Body of pancreas (tissue), 4 donors: ENCODE measurements at regions of chr3 and their contacts with region 1.

Region 1: GRCh38 chr3:5187156-5187919 is at the start of gene EDEM1:
- DNase-seq: peak; percentile 95 to 96 (median 95)
- ATAC-seq: peak; percentile 94
- H3K4me3 ChIP-seq: peak within 1 kb of the TSS; percentile 73 to 76
- H3K27ac ChIP-seq: peak within 1 kb of the TSS; percentile 85 to 99 (median 95)
- H3K4me1 ChIP-seq: peaks cover 36% of the 10 kb centered on the region
- H3K27me3 ChIP-seq: no peaks in the 10 kb centered on the region
- CTCF ChIP-seq: no peak
- POLR2A ChIP-seq: peak; percentile 82 to 87 (median 86)
- total RNA-seq, gene EDEM1: 23.9 to 46.1 TPM

Region 2: DNA sequence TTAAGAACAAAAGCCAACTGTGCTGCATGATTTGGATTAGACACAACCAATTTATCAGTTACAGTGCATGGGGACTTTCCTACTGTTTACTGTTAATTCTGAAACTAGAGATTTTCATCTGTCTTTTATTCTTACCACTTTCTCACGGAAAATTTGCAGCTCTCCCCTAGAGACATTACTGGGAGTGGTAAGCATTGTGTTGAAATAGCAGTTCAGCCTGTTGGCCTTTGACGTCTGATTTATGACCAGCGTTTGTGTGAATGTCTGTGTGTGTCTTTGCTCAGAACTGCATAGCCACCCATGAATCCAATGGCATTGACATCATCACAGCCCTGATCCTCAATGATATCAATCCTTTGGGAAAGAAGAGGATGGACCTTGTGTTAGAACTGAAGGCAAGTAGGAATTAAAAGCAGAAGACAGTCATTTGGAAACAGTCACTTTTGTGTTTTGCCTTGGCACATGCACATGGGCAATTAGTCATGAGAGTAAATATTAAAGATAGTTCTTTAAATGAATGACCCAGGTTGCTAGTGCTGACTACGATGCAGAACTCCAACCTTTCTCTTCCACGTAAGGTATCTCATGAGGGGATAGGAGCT is 410.3 kb before region 1 on chr3:
- intact Hi-C with region 1: no loop called
- DNase-seq: peak in 2 of 4 donors; percentile 27 to 60
- ATAC-seq: peak; percentile 22
- H3K4me3 ChIP-seq: no peak overlapping the region
- H3K27ac ChIP-seq: peak overlapping the region; percentile 49 to 74 (median 56)
- H3K4me1 ChIP-seq: peaks cover 49% of the 10 kb centered on the region
- H3K27me3 ChIP-seq: no peaks in the 10 kb centered on the region
- CTCF ChIP-seq: no peak
- POLR2A ChIP-seq: no peak

Region 3: GRCh38 chr3:5110337-5110736 is 77.0 kb before region 1 on chr3:
- intact Hi-C with region 1: no loop called
- DNase-seq: no peak
- ATAC-seq: no peak
- H3K4me3 ChIP-seq: no peak overlapping the region
- H3K27ac ChIP-seq: no peak overlapping the region
- H3K4me1 ChIP-seq: no peaks in the 10 kb centered on the region
- H3K27me3 ChIP-seq: no peaks in the 10 kb centered on the region
- CTCF ChIP-seq: no peak
- POLR2A ChIP-seq: no peak

Region 4: DNA sequence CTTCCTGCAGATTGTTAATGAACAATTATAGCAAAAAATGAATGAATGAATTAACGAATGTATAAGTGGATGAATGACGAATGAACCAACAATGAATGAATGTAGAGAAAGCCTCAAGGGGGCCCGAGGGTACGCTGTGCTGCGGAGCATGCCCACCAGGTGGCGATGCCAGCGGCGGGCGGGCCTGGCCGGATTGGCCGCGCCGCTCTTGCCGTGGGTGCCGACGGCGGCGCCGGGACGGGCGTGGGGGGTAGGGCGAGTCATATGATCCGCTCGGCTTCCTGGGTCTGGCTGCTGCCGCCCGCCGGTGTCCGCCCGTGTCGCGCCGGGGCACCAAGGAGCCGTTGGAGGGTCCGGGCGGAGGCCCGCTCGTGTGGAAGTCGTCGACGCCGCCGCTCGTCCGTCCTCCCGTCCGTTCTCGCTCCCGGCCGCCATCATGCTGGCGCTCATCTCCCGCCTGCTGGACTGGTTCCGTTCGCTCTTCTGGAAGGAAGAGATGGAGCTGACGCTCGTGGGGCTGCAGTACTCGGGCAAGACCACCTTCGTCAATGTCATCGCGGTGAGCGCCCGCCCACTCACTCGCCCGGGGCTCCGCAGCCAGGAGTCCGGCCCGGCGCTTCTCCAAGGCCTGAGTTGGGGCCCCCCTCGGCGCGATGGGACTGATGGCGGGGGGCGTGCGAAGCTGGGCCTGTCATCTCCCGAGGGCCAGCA is 65.2 kb before region 1 on chr3 and contains the start of gene ARL8B:
- intact Hi-C with region 1: loop called (anchors 10 kb)
- DNase-seq: peak; percentile 88 to 91 (median 90)
- ATAC-seq: peak; percentile 99
- H3K4me3 ChIP-seq: peak within 1 kb of the TSS; percentile 89 to 96
- H3K27ac ChIP-seq: peak within 1 kb of the TSS; percentile 83 to 92 (median 86)
- H3K4me1 ChIP-seq: peaks cover 40% of the 10 kb centered on the region
- H3K27me3 ChIP-seq: no peaks in the 10 kb centered on the region
- CTCF ChIP-seq: peak; percentile 88 to 99 (median 97)
- POLR2A ChIP-seq: peak; percentile 78 to 88 (median 88)
- total RNA-seq, gene ARL8B: 21.0 to 30.3 TPM

Region 5: DNA sequence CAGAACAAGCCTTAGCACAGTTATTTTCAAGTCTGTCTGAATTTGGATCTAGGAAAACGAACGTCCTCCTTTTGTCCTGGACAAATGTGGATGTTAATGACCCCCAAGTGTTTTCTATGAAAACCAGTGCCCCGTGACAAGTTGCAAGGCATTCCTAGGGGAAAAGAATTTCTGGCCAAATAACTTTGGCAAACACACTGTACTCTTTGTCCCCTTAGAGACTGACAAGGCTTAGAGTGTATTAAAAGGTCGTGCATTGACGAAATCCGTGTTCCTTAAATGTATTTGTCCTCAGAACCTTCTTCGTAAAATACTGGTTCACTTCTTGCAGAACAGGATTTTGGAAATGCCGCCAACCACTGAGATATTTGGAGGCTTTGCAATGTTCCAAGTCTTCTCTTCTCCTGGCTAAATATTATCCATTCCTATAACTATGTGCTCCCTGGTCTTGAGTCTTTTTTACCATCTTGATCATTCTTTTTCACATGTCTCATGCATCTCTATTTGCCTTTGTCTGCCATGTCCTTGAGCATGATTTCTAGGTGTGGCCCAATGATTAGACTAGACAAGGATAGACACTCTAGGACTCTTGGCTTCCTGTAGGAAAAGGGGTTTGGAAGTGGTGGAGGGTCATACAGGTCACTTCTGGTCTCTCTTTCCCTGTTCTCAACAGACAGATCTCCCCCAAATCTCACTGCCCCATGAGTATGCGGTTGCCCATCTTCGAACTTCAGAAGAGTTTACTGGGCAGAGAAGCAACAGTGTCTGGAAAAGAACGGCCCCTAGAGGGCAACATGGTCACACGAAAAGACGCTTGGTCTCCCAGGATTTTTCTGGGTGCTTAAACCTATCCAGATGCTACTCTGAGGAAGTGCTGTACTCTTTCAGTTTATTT is 117.7 kb after region 1 on chr3:
- intact Hi-C with region 1: no loop called
- DNase-seq: peak; percentile 53 to 66 (median 61)
- ATAC-seq: peak; percentile 80
- H3K4me3 ChIP-seq: no peak overlapping the region
- H3K27ac ChIP-seq: no peak overlapping the region
- H3K4me1 ChIP-seq: no peaks in the 10 kb centered on the region
- H3K27me3 ChIP-seq: no peaks in the 10 kb centered on the region
- CTCF ChIP-seq: peak; percentile 50 to 68 (median 67)
- POLR2A ChIP-seq: no peak